ENCODE measurements at regions of chr22 and their contacts with region 1.

Region 1: GRCh38 chr22:38104084-38104483 is 6.4 kb downstream of the BAIAP2L2 start:
- DNase-seq: peak; percentile 62
- ATAC-seq: peak; percentile 86
- H3K4me3 Mint-ChIP-seq: no peak overlapping the region
- H3K27ac Mint-ChIP-seq: peak overlapping the region; percentile 90; the same call in 1 of the 2 replicates
- H3K4me1 Mint-ChIP-seq: no peaks in the 10 kb centered on the region
- H3K27me3 Mint-ChIP-seq: 0 out of 2 replicates have a peak, but pooled peaks cover 2% of the 10 kb centered on the region
- CTCF ChIP-seq: no peak; the same call in 1 of the 2 replicates

Region 2: DNA sequence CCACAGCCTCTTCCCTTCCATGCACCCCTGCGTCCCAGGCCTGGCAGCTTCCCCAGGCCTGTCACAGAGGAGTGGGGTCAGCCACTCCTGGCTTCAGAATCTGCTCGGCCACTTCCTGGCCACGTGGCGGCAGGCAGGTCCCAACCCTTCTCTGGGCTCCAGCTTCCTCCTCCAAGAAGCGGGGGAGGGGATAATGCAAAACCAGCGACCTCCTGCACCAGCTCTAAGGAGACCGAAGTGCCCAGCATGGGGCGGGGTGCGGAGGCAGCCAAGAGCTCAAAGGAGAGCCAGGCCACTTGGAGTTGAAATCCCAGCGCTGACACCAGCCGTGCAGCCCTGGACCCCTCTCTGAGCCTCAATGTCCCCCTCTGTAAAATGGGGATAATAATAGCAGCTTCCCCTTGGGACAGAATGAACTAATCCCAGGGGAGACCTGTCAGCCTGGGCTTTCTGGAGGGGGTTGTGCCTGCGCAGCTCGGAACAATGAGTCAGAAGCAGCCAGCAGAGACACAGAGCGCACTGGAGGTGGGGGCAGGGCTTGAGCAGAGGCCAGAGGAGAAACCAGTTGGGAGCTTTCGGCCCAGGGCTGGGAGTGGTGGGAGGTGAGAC is 69.7 kb before region 1 on chr22:
- CTCF ChIA-PET with region 1: interaction called, 14 read pairs
- POLR2A ChIA-PET with region 1: no interaction called
- DNase-seq: peak; percentile 71
- ATAC-seq: peak; percentile 79
- H3K4me3 Mint-ChIP-seq: no peak overlapping the region
- H3K27ac Mint-ChIP-seq: peak overlapping the region; percentile 34
- H3K4me1 Mint-ChIP-seq: peaks cover 31% of the 10 kb centered on the region
- H3K27me3 Mint-ChIP-seq: no peaks in the 10 kb centered on the region; the same call in 1 of the 2 replicates
- CTCF ChIP-seq: no peak

Region 3: DNA sequence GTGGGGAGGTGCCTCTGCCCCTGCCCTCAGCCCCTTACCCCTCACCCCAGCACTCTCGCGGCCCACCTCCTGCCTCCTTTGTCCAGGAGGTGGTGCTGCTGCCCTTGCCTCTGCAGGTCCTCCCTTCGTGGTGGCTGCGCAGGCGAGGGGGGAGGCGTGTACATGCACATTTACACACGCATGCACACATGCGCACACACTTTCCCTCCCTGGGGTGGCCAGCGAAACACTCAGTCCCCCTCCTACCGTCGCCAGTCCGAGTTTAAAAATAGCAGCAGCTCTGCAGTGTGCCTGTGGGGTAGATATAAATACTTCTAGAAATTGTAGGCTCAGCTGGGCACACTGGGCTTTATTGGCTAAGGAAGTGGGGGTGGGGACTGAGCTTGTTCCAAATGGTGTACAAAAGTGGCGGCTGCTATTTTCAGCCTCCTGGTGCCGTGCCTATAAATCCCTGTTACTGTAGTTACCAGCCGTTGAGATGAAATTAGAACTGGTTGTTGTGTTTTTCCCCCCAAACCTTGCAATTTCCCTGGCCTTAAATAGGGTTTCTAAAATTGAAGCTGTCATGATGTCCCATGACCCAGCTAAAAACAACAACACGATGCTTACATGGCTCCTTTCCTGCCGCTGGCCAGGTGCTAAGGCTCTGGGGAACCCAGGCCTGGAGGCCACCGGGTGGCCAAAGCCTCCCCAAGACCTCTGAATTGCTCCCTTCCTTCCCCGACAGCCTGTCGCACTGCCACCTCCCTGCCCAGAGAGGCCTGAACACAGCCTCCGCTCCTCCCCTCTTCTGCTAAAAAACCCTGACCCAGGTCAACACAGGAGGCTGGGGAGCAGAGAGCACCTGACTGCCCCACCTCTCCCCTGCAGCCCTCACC is 34.5 kb before region 1 on chr22:
- CTCF ChIA-PET with region 1: interaction called, 44 read pairs
- POLR2A ChIA-PET with region 1: no interaction called
- DNase-seq: peak; percentile 58
- ATAC-seq: peak; percentile 66
- H3K4me3 Mint-ChIP-seq: no peak overlapping the region
- H3K27ac Mint-ChIP-seq: peak overlapping the region; percentile 45; the same call in 1 of the 2 replicates
- H3K4me1 Mint-ChIP-seq: peaks cover 2% of the 10 kb centered on the region; the same call in 1 of the 2 replicates
- H3K27me3 Mint-ChIP-seq: no peaks in the 10 kb centered on the region
- CTCF ChIP-seq: peak; percentile 25; the same call in 1 of the 2 replicates

Region 4: GRCh38 chr22:38080850-38081635 is 23.0 kb before region 1 on chr22:
- CTCF ChIA-PET with region 1: interaction called, 183 read pairs
- POLR2A ChIA-PET with region 1: no interaction called
- DNase-seq: peak; percentile 68
- ATAC-seq: peak; percentile 65
- H3K4me3 Mint-ChIP-seq: peak overlapping the region; percentile 38; the same call in 1 of the 2 replicates
- H3K27ac Mint-ChIP-seq: no peak overlapping the region
- H3K4me1 Mint-ChIP-seq: peaks cover 4% of the 10 kb centered on the region; the same call in 1 of the 2 replicates
- H3K27me3 Mint-ChIP-seq: peaks cover 24% of the 10 kb centered on the region
- CTCF ChIP-seq: no peak

Region 5: GRCh38 chr22:38124236-38124974 is 20.3 kb after region 1 on chr22:
- CTCF ChIA-PET with region 1: interaction called, 11 read pairs
- POLR2A ChIA-PET with region 1: no interaction called
- DNase-seq: no peak
- ATAC-seq: peak; percentile 81
- H3K4me3 Mint-ChIP-seq: no peak overlapping the region
- H3K27ac Mint-ChIP-seq: peak overlapping the region; percentile 69
- H3K4me1 Mint-ChIP-seq: peaks cover 7% of the 10 kb centered on the region
- H3K27me3 Mint-ChIP-seq: no peaks in the 10 kb centered on the region
- CTCF ChIP-seq: no peak

Region 6: GRCh38 chr22:38143036-38143697 is 39.1 kb after region 1 on chr22:
- CTCF ChIA-PET with region 1: interaction called, 32 read pairs
- POLR2A ChIA-PET with region 1: interaction called, 4 read pairs
- DNase-seq: no peak
- ATAC-seq: no peak
- H3K4me3 Mint-ChIP-seq: no peak overlapping the region
- H3K27ac Mint-ChIP-seq: peak overlapping the region; percentile 43
- H3K4me1 Mint-ChIP-seq: peaks cover 9% of the 10 kb centered on the region
- H3K27me3 Mint-ChIP-seq: no peaks in the 10 kb centered on the region
- CTCF ChIP-seq: no peak